Posterior vena cava (tissue), 2 donors: ENCODE measurements at regions of chr6 and their contacts with region 1.

Region 1: GRCh38 chr6:38283734-38284362 is 355.9 kb downstream of the BTBD9 start:
- DNase-seq: no peak

Region 2: GRCh38 chr6:37051138-37052026 is 1232.5 kb before region 1 on chr6:
- intact Hi-C with region 1: loop called in 1 of 2 experiments (anchors 5 kb)
- DNase-seq: peak; percentile 97